Transverse colon (tissue), 4 donors: ENCODE measurements at regions of chr3 and their contacts with region 1.

Region 1: GRCh38 chr3:161957467-161957866 is 460.9 kb downstream of the OTOL1 start:
- DNase-seq: no peak
- H3K4me3 ChIP-seq: no peak overlapping the region
- H3K27ac ChIP-seq: no peak overlapping the region
- H3K4me1 ChIP-seq: no peaks in the 10 kb centered on the region
- H3K27me3 ChIP-seq: no peaks in the 10 kb centered on the region
- CTCF ChIP-seq: no peak
- EP300 ChIP-seq: no peak
- POLR2A ChIP-seq: no peak

Region 2: GRCh38 chr3:161914737-161915417 is 42.6 kb before region 1 on chr3:
- in situ Hi-C with region 1: no loop called
- intact Hi-C with region 1: loop called (anchors 2 kb)
- DNase-seq: peak; percentile 14
- H3K4me3 ChIP-seq: no peak overlapping the region
- H3K27ac ChIP-seq: no peak overlapping the region
- H3K4me1 ChIP-seq: peaks cover 0 to 4% (median 0%) of the 10 kb centered on the region in 4 donors
- H3K27me3 ChIP-seq: no peaks in the 10 kb centered on the region
- CTCF ChIP-seq: peak in 2 of 5 experiments; percentile 19 to 32
- EP300 ChIP-seq: no peak
- POLR2A ChIP-seq: no peak